ENCODE measurements at regions of chrX and their contacts with region 1.

Region 1: GRCh38 chrX:16719334-16720084 is at the start of gene SYAP1:
- DNase-seq: peak; percentile 98
- H3K4me3 Mint-ChIP-seq: peak within 1 kb of the TSS; percentile 94
- H3K27ac Mint-ChIP-seq: peak within 1 kb of the TSS; percentile 94
- H3K4me1 Mint-ChIP-seq: peaks cover 21% of the 10 kb centered on the region
- H3K27me3 Mint-ChIP-seq: no peaks in the 10 kb centered on the region
- total RNA-seq, gene SYAP1: 19.6 and 20.1 TPM in 2 replicates

Region 2: DNA sequence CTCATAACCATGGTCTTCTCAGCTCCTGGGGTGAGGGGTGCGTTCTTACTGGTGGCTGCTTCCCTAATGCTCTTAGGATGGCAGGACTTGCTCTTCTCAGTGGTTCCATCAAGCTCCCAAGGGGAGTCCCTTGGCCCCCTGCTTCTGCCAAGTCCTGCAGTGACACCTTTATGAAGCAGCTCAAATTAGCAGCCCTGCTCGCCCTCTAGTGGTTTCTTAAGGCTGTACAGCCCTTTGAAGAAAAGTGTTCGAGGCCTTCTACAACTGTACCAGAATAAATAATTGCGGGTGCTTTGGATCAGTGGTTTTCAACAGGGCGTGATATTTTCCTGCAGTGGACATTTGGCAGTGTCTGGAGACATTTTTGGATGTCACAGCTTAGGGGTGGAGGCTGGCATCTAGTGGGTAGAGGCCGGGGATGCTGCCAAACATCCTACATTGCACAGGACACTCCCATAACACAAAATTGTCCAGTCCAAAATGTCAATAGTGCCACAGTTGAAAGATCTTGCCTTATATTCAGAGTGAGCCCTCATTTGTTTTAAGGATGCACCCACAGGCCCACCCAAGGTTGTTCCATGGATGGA is 274.2 kb before region 1 on chrX:
- intact Hi-C with region 1: no loop called
- DNase-seq: peak; percentile 75
- H3K4me3 Mint-ChIP-seq: no peak overlapping the region
- H3K27ac Mint-ChIP-seq: no peak overlapping the region
- H3K4me1 Mint-ChIP-seq: peaks cover 4% of the 10 kb centered on the region
- H3K27me3 Mint-ChIP-seq: peaks cover 3% of the 10 kb centered on the region

Region 3: GRCh38 chrX:16786139-16786790 is 66.8 kb after region 1 on chrX and contains the start of gene TXLNG:
- intact Hi-C with region 1: loop called (anchors 1 kb)
- DNase-seq: peak; percentile 97
- H3K4me3 Mint-ChIP-seq: peak within 1 kb of the TSS; percentile 99
- H3K27ac Mint-ChIP-seq: peak within 1 kb of the TSS; percentile 96
- H3K4me1 Mint-ChIP-seq: peaks cover 11% of the 10 kb centered on the region
- H3K27me3 Mint-ChIP-seq: no peaks in the 10 kb centered on the region
- total RNA-seq, gene TXLNG: 23.4 and 24.4 TPM in 2 replicates